ENCODE measurements at regions of chr4 and their contacts with region 1.

Region 1: DNA sequence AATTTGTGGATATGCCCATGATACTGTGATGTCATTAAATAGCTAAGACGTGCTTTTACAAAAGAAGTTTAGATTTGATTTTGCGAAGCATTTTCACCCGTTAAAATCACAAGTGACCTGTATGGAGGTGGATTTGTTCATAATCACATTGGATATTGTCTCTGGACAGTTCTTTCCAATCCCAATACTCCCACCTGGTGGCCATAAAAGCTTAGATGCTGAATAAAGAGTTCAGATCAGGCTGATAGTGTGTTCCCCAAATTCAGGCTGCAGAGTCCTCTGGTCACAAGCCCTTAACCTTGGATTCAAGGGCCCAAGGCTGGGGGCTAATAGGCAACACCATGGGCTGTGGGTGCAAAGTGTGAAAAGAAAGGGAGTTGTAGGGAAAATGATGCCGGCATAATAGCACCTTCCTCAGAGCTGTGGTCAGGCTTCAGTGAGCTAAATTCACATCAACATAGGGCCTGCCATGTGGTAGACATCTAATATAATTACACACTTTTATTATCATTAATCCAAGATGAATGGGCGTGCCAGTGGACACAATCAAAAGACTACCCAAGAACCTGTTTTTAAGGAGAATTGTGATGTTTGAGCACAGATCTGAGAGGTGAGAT is 28.1 kb downstream of the SMIM43 start:
- DNase-seq: no peak
- H3K4me3 Mint-ChIP-seq: no peak overlapping the region
- H3K27ac Mint-ChIP-seq: no peak overlapping the region
- H3K4me1 Mint-ChIP-seq: no peaks in the 10 kb centered on the region
- H3K27me3 Mint-ChIP-seq: peaks cover 21% of the 10 kb centered on the region

Region 2: DNA sequence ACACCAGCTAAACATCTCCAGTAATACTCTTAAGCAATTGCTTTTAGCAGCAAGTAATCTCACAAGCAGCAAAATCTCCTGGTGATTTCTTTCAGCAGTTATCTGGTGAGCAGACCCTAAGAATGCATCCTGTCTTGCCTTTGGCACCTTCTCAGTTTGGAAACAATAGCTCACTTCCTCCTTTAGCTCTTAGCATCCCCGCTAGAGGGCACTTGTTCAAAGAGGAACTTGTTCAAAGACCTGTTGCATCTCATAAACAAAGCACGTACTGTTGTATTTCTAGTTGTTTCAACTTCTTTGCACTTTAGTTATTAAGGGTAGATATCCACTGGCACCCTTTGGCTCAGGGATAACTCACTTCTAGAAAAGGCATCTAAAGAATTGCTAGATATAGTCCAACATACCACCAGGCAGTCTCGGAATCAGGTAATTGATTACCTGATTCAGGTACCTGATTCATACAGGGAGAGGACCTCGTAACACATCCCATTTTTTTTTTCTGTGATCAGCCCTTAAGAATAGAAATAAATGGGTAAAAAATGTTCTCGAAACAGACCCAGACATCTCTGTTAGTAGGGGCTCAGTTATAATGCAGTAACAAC is 274.1 kb before region 1 on chr4:
- intact Hi-C with region 1: loop called (anchors 1 kb)
- DNase-seq: peak; percentile 31
- H3K4me3 Mint-ChIP-seq: no peak overlapping the region
- H3K27ac Mint-ChIP-seq: no peak overlapping the region
- H3K4me1 Mint-ChIP-seq: peaks cover 4% of the 10 kb centered on the region
- H3K27me3 Mint-ChIP-seq: peaks cover 18% of the 10 kb centered on the region

Region 3: DNA sequence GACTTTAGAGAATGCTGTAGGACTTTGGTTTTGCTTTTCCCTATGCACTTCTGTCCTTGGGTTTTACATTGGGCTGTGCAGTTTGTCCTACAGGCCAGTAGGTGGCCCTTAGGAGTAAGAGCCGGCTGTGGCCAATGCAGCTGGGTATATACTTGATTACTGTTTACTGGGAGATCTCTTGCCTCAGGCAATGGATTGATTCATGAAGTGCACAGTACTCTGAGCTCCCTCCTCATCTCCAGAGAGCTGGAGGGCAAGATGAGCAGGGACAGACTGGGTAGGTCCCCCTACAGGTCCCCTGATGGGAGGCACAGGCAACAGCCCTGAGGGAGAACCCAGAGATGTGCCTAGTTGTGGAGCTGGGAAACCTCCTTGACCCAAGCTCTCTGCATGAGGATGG is 252.2 kb before region 1 on chr4:
- intact Hi-C with region 1: loop called (anchors 1 kb)
- DNase-seq: no peak
- H3K4me3 Mint-ChIP-seq: no peak overlapping the region
- H3K27ac Mint-ChIP-seq: no peak overlapping the region
- H3K4me1 Mint-ChIP-seq: no peaks in the 10 kb centered on the region
- H3K27me3 Mint-ChIP-seq: peaks cover 22% of the 10 kb centered on the region

Region 4: DNA sequence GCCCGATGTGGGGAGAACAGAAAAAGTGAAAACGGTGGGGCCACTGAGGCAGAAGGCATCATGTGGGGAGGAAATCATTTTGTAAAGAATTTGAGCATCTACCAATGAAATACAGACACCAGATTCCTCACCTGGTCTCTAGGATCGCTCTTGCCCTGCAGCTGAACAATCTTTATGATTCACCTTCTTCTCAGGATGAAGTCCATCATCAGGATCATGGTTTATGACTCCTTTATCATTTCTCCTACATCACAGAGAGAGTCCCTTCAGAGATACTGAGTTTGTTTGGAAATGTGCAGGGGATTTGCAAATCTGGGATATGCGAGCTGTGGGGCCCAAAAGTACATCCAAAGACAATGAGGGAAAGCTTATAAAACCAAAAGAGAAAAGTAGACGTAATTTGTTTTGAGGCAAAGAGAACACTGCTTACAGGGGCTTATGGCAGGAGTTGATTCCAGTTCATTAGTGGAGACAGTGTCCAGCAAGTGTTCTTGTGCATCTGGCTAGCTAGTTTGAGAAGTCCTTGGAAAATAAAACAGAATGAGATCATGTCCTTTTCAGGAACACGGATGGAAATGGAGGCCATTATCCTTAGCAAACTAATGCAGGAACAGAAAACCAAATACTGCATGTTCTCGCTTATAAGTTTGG is 24.7 kb before region 1 on chr4:
- intact Hi-C with region 1: no loop called
- DNase-seq: no peak
- H3K4me3 Mint-ChIP-seq: no peak overlapping the region
- H3K27ac Mint-ChIP-seq: no peak overlapping the region
- H3K4me1 Mint-ChIP-seq: peaks cover 44% of the 10 kb centered on the region
- H3K27me3 Mint-ChIP-seq: peaks cover 24% of the 10 kb centered on the region